PC-9 (cell line): ENCODE measurements at regions of chr11 and their contacts with region 1.

Region 1: DNA sequence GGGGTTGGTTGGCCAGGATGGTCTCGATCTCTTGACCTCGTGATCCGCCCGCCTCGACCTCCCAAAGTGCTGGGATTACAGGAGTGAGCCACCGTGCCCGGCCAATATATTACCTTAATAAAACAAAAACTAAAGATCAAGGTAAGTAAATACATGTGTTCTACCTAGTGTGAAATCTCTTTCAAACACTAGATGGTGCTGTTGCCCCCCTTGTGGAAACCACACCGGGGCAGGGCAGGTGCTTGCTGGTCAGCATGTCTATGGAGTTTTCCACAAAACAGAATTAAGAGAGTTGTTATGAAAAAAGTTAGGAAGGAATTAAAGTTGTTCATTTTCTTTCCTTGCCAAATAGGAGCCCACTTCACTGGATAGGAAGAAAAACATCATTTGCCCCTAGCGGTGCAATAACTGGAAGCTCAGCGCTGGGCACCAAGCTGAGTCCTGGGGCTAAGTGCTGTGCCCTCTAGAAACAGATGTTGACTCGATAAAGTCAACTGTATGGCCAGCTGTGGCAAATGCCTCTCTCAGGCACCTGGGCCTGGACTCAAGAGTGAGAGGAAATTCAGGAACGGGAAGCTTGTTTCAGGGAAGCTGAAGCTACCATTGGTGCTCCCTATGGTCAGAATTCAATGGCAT is 6.3 kb upstream of the KCNJ5 start:
- DNase-seq: peak; percentile 67 to 70
- H3K4me3 ChIP-seq: no peak overlapping the region
- H3K27ac ChIP-seq: no peak overlapping the region
- H3K4me1 ChIP-seq: no peaks in the 10 kb centered on the region
- H3K27me3 ChIP-seq: peaks cover 22% of the 10 kb centered on the region; the same call in 1 of the 2 replicates
- CTCF ChIP-seq: peak; percentile 88

Region 2: GRCh38 chr11:128039140-128040021 is 845.4 kb before region 1 on chr11:
- CTCF ChIA-PET with region 1: no interaction called
- POLR2A ChIA-PET with region 1: no interaction called
- intact Hi-C with region 1: loop called (anchors 10 kb)
- DNase-seq: peak in 1 of 2 experiments; percentile 45
- H3K4me3 ChIP-seq: no peak overlapping the region
- H3K27ac ChIP-seq: no peak overlapping the region
- H3K4me1 ChIP-seq: no peaks in the 10 kb centered on the region
- H3K27me3 ChIP-seq: no peaks in the 10 kb centered on the region
- CTCF ChIP-seq: no peak

Region 3: DNA sequence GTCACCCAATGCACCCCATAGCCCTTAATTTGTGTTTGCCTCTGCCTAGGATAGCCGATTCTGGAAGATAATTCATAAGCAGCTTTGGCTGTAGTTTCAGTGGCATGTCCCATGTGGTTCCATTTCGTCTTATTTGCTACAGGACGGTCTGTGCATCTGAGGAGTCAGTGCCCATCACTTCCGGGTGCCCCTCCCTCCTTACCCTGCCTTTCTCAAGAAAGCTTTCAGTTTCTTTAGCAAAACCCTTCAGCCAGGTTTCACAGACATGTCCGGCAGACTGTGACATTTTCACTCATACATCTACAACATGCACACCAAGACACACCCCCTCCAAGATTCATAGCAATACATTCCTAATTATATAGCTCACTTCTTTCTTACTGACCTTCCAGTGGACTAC is 43.6 kb after region 1 on chr11:
- CTCF ChIA-PET with region 1: no interaction called
- POLR2A ChIA-PET with region 1: no interaction called
- intact Hi-C with region 1: no loop called
- DNase-seq: no peak
- H3K4me3 ChIP-seq: no peak overlapping the region
- H3K27ac ChIP-seq: no peak overlapping the region
- H3K4me1 ChIP-seq: no peaks in the 10 kb centered on the region
- H3K27me3 ChIP-seq: peaks cover 57% of the 10 kb centered on the region
- CTCF ChIP-seq: no peak

Region 4: DNA sequence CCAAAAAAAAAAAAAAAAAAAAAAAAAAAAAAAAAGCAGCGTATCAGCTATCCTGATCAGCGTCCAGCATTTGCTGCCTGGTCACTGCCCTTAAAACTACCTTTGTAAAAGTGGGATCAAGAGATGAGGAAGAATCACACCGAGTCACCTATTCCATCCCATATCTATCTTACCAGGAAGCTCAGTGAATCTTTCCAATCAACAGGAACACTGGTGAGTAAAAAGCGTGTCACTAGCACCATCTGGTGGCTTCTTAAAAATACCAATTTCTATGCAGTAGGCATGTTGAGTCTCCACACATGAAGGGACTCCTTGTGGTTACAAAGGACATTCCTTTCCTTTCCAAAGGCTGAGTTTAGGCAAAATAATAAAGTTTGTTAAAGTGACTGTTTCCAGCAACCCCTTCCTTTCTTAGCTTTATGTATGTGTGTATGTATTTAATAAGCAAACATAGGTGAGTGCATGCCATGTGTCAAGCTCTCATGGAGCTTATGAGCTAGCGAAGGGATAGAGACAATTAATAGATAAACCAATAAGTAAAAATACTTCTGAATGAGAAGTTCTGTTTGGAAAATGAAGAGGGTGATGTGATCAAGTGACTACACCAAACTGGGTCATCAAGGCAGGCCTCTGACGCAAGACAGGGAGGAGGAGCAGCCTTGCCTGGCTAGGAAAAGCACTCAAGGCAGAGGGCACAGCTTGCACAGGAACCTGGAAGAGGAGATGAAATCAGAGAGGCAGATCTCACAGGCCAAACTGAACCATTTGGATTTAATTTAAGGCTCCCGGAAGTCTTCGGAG is 71.8 kb after region 1 on chr11:
- CTCF ChIA-PET with region 1: interaction called, 29 read pairs
- POLR2A ChIA-PET with region 1: no interaction called
- intact Hi-C with region 1: loop called (anchors 1 kb)
- DNase-seq: peak; percentile 50 to 69
- H3K4me3 ChIP-seq: no peak overlapping the region
- H3K27ac ChIP-seq: no peak overlapping the region
- H3K4me1 ChIP-seq: no peaks in the 10 kb centered on the region
- H3K27me3 ChIP-seq: no peaks in the 10 kb centered on the region
- CTCF ChIP-seq: peak; percentile 82

Region 5: DNA sequence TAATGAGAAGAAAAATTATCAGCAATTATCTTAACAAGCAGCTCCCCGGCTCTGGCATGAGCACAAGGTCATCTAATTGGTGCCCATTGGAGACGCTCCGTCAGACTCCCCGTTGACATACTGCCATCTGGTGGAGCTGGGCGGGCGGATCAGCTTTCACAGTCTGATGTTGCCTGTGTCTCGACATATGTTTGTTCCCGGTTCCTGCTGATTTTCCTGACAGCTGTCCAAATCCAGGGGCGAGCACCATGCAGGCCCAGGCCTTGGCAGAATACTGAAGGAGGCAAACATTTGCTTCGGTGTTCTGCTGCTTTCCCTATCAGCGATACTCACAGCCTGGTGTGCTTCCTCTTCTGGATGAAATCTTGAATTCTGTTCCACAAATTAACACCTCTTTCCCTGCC is 447.1 kb after region 1 on chr11:
- CTCF ChIA-PET with region 1: no interaction called
- POLR2A ChIA-PET with region 1: no interaction called
- intact Hi-C with region 1: loop called (anchors 1 kb)
- DNase-seq: peak; percentile 71 to 79
- H3K4me3 ChIP-seq: no peak overlapping the region
- H3K27ac ChIP-seq: no peak overlapping the region
- H3K4me1 ChIP-seq: 0 out of 2 replicates have a peak, but pooled peaks cover 3% of the 10 kb centered on the region
- H3K27me3 ChIP-seq: no peaks in the 10 kb centered on the region
- CTCF ChIP-seq: peak; percentile 88

Region 6: DNA sequence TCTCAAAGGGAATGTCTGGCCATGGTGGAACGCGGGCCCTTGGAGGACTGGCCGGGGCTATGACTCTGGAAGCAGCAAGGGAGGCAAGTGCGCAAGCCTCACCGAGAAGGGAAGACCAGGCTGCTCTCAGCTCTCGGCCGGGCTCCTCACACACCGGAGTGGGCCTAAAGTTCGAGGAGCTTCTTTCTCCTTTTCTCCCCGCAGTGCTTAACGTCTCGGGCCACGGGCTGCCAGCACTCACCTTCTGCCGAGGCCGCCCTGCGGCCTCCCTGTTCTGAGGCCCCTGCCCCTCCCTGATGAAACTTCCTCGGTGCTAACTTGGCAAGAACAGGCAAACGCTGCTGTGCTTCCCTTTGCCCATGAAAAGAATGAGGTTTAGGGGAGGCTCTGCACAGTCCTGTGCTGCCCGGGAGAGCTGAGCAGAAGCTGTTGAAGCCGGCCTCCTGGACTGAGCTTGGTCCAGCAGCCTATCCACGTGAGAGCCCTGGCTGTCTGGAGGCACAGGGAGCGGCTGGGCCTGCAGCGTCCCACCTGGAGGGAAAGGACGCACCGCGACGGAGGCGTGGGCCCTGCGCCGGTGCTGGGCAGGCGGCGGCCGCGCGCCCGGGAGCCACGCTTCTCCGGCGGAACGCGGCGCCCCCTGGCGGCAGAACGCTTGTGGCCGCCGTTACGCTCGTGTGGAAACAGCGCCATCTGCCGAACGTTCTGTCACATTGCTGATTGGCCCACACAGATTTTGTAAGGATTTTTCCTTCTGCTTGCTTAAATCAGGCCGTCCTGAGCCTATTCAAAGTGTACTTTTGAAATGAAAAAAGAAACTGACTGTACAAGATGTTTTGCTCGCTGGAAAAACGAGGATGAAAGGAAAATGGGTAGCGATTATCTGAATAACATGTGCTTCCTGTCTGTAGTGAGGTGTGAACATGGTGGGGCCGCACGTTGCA is 865.8 kb after region 1 on chr11:
- CTCF ChIA-PET with region 1: no interaction called
- POLR2A ChIA-PET with region 1: no interaction called
- intact Hi-C with region 1: loop called (anchors 1 kb)
- DNase-seq: peak; percentile 67 to 84
- H3K4me3 ChIP-seq: peak overlapping the region; percentile 40; the same call in 1 of the 2 replicates
- H3K27ac ChIP-seq: no peak overlapping the region
- H3K4me1 ChIP-seq: 0 out of 2 replicates have a peak, but pooled peaks cover 5% of the 10 kb centered on the region
- H3K27me3 ChIP-seq: no peaks in the 10 kb centered on the region
- CTCF ChIP-seq: peak; percentile 93